HCT116 (cell line): ENCODE measurements at regions of chr9 and their contacts with region 1.

Region 1: DNA sequence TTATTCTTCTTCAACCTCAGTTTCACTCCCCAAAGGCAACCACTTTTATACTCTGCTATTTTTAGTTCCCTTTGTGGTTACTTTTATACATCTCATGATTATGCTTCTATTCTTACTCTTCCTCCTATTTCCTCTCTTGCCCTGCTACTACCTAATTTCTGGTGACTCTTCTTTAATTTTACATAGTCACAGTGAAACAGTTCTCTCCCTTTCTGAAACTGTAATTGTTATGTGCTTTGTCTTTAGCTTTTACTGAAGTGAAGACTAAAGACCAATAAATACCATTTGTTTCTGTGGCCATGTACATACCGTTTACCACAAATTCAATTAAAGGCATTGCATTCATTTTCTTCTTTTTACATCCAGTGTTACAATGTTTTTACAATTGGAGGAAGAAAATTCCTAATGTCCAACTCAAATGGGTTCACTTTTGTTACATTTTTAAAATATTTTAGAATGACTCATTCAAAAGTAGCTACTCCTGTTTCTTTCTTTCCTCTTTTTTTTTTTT is 410.6 kb downstream of the PSAT1 start:
- DNase-seq: no peak
- ATAC-seq: no peak
- H3K4me3 ChIP-seq: no peak overlapping the region
- H3K27ac ChIP-seq: no peak overlapping the region
- H3K4me1 ChIP-seq: 0 out of 4 replicates have a peak, but pooled peaks cover 0 to 3% of the 10 kb centered on the region in 2 experiments
- H3K27me3 ChIP-seq: no peaks in the 10 kb centered on the region
- CTCF ChIP-seq: no peak
- POLR2A ChIP-seq: no peak
- RAD21 ChIP-seq: no peak

Region 2: DNA sequence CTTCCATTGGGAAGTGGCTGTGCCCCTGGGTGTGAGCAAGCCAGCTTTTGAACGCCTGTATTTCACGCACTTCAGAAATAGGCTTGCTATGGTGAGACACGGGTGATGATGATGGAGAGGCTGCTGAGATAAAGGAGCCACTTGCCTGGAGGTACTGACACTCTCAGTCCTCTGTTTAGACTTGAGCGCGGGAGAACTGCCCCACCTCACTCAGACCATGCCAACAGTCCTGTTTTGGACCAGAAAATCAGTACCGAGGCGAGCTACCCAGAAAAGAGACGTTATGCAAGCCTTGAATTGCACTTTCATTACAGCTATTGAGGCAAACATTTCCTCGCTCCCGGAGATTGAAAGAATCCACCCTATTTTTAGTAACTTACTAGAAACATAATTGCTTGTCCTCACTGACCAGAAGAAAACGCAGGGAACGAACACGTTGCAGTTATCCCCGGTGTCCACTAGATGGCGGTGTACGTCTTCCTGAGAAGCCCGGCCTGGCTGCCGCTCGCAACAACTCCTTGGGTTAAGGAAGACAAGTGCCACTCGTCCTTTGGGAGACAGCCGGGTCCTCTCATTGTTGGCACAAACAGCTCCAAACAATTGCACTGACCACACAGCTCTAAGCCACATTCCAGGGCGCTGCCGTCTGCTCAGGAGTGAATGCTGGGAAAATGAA is 268.2 kb before region 1 on chr9:
- CTCF ChIA-PET with region 1: no interaction called
- POLR2A ChIA-PET with region 1: no interaction called
- RAD21 ChIA-PET with region 1: no interaction called
- intact Hi-C with region 1: loop called (anchors 10 kb)
- DNase-seq: peak; percentile 62
- ATAC-seq: peak; percentile 90
- H3K4me3 ChIP-seq: no peak overlapping the region
- H3K27ac ChIP-seq: no peak overlapping the region
- H3K4me1 ChIP-seq: no peaks in the 10 kb centered on the region
- H3K27me3 ChIP-seq: peaks cover 9% of the 10 kb centered on the region; the same call in 1 of the 2 replicates
- CTCF ChIP-seq: peak; percentile 57 to 97 (median 87); a peak in 5 of 6 replicates
- POLR2A ChIP-seq: no peak
- RAD21 ChIP-seq: peak; percentile 85